ENCODE measurements at regions of chr11 and their contacts with region 1.

Region 1: DNA sequence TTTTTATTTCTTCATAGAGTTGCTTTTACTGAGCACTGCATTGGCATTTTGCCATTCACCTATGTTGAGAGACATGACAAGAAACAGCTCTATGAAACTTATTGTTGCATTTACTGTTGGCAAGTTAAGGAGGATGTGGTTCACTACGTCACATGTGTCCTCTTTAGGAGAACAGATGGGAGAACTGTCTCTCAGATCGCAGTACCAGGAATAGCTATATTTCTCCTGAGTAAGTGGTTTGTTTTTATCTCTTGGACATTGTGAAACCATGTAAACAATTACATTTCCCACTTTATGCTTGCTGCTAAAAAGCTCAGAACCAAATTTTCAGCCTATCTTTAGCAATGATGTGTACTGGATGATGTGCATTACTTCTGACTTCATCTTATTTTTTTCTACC is 34.8 kb upstream of the PSMA1 start:
- DNase-seq: peak in 8 of 14 experiments; percentile 7 to 89 (median 46)
- ATAC-seq: peak; percentile 90
- H3K4me3 ChIP-seq: no peak overlapping the region
- H3K4me3 Mint-ChIP-seq: peak overlapping the region; percentile 56
- H3K27ac ChIP-seq: peak overlapping the region; percentile 35 to 51
- H3K27ac Mint-ChIP-seq: peak overlapping the region; percentile 92
- H3K4me1 ChIP-seq: peaks cover 3% of the 10 kb centered on the region
- H3K4me1 Mint-ChIP-seq: peaks cover 47% of the 10 kb centered on the region
- H3K27me3 ChIP-seq: no peaks in the 10 kb centered on the region
- H3K27me3 Mint-ChIP-seq: no peaks in the 10 kb centered on the region
- CTCF ChIP-seq: no peak

Region 2: GRCh38 chr11:14480716-14481115 is 74.2 kb before region 1 on chr11:
- CTCF ChIA-PET with region 1: no interaction called
- POLR2A ChIA-PET with region 1: no interaction called
- intact Hi-C with region 1: no loop called
- DNase-seq: no peak
- ATAC-seq: no peak
- H3K4me3 ChIP-seq: no peak overlapping the region
- H3K4me3 Mint-ChIP-seq: no peak overlapping the region
- H3K27ac ChIP-seq: no peak overlapping the region
- H3K27ac Mint-ChIP-seq: no peak overlapping the region
- H3K4me1 ChIP-seq: no peaks in the 10 kb centered on the region
- H3K4me1 Mint-ChIP-seq: peaks cover 15% of the 10 kb centered on the region
- H3K27me3 ChIP-seq: no peaks in the 10 kb centered on the region
- H3K27me3 Mint-ChIP-seq: no peaks in the 10 kb centered on the region
- CTCF ChIP-seq: no peak

Region 3: DNA sequence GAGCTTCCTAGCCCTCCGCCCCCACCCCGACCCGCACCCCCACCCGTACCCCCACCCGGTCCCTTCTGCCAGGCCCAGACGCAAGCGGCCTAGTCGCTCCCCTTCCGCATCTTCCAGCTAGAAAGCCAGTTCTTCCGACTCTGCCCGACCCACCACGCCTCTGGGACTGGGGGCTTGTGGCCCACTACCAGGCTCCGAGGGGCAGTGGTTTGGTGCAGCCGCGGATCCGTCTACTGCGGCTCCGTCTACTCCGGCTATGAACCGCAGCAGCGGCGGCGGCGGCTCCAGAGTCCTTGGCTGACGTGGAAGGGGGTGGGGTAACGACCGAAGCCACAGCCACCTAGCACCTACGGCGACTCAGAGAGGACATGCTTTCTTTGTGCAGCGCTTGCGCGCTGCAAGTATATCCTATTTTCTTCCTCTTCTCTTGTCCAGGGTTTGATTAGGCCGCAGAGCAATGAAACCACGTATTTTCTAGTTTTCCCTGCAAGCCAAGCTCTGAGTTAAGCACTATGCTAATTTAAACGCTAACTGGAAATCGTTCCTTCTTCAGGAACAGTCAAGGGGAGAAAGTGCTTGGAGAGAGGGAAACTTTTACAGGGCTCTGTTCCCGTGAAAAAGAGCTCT is 55.3 kb before region 1 on chr11 and contains the start of gene COPB1:
- CTCF ChIA-PET with region 1: no interaction called
- POLR2A ChIA-PET with region 1: no interaction called
- intact Hi-C with region 1: no loop called
- DNase-seq: peak; percentile 84 to 96 (median 90)
- ATAC-seq: peak; percentile 94
- H3K4me3 ChIP-seq: peak within 1 kb of the TSS; percentile 85
- H3K4me3 Mint-ChIP-seq: peak within 1 kb of the TSS; percentile 97
- H3K27ac ChIP-seq: peak within 1 kb of the TSS; percentile 67 to 84
- H3K27ac Mint-ChIP-seq: peak within 1 kb of the TSS; percentile 92
- H3K4me1 ChIP-seq: peaks cover 6% of the 10 kb centered on the region
- H3K4me1 Mint-ChIP-seq: peaks cover 53% of the 10 kb centered on the region
- H3K27me3 ChIP-seq: no peaks in the 10 kb centered on the region
- H3K27me3 Mint-ChIP-seq: no peaks in the 10 kb centered on the region
- CTCF ChIP-seq: no peak
- total RNA-seq, gene COPB1: 93.1 to 95.9 TPM

Region 4: GRCh38 chr11:14566331-14567063 is 11.5 kb after region 1 on chr11:
- CTCF ChIA-PET with region 1: interaction called, 3 read pairs
- POLR2A ChIA-PET with region 1: interaction called, 22 read pairs
- intact Hi-C with region 1: no loop called
- DNase-seq: no peak
- ATAC-seq: no peak
- H3K4me3 ChIP-seq: no peak overlapping the region
- H3K4me3 Mint-ChIP-seq: no peak overlapping the region
- H3K27ac ChIP-seq: no peak overlapping the region
- H3K27ac Mint-ChIP-seq: peak overlapping the region; percentile 37
- H3K4me1 ChIP-seq: peaks cover 30% of the 10 kb centered on the region
- H3K4me1 Mint-ChIP-seq: peaks cover 68% of the 10 kb centered on the region
- H3K27me3 ChIP-seq: no peaks in the 10 kb centered on the region
- H3K27me3 Mint-ChIP-seq: no peaks in the 10 kb centered on the region
- CTCF ChIP-seq: no peak

Region 5: GRCh38 chr11:14672635-14673034 is 117.7 kb after region 1 on chr11:
- CTCF ChIA-PET with region 1: no interaction called
- POLR2A ChIA-PET with region 1: no interaction called
- intact Hi-C with region 1: no loop called
- DNase-seq: no peak
- ATAC-seq: no peak
- H3K4me3 ChIP-seq: no peak overlapping the region
- H3K4me3 Mint-ChIP-seq: peak overlapping the region; percentile 4
- H3K27ac ChIP-seq: no peak overlapping the region
- H3K27ac Mint-ChIP-seq: peak overlapping the region; percentile 48
- H3K4me1 ChIP-seq: no peaks in the 10 kb centered on the region
- H3K4me1 Mint-ChIP-seq: peaks cover 92% of the 10 kb centered on the region
- H3K27me3 ChIP-seq: no peaks in the 10 kb centered on the region
- H3K27me3 Mint-ChIP-seq: no peaks in the 10 kb centered on the region
- CTCF ChIP-seq: no peak

Region 6: DNA sequence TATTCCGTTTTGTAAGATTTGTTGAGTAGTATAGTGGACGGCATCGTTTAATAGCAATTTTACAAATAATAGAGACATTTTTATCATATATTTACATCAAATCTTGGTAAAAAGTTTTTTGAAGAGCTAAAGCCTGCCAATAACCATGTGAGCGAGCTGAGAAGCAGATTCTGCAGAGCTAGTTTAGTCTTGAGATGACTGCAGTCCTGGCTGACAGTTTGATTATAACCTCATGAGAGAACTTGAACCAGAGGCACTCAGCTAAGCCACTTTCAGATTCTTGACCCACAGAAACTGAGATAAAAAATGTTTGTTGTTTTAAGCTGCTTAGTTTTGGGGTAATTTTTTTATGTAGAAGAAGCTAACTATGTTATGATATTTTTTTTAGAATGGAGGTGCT is 167.5 kb after region 1 on chr11:
- CTCF ChIA-PET with region 1: no interaction called
- POLR2A ChIA-PET with region 1: no interaction called
- intact Hi-C with region 1: no loop called
- DNase-seq: no peak
- ATAC-seq: no peak
- H3K4me3 ChIP-seq: no peak overlapping the region
- H3K4me3 Mint-ChIP-seq: no peak overlapping the region
- H3K27ac ChIP-seq: no peak overlapping the region
- H3K27ac Mint-ChIP-seq: no peak overlapping the region
- H3K4me1 ChIP-seq: no peaks in the 10 kb centered on the region
- H3K4me1 Mint-ChIP-seq: peaks cover 40% of the 10 kb centered on the region
- H3K27me3 ChIP-seq: no peaks in the 10 kb centered on the region
- H3K27me3 Mint-ChIP-seq: no peaks in the 10 kb centered on the region
- CTCF ChIP-seq: no peak

Measured in CD4-positive, alpha-beta T cell (primary cell).